ENCODE measurements at regions of chr10 and their contacts with region 1.

Region 1: DNA sequence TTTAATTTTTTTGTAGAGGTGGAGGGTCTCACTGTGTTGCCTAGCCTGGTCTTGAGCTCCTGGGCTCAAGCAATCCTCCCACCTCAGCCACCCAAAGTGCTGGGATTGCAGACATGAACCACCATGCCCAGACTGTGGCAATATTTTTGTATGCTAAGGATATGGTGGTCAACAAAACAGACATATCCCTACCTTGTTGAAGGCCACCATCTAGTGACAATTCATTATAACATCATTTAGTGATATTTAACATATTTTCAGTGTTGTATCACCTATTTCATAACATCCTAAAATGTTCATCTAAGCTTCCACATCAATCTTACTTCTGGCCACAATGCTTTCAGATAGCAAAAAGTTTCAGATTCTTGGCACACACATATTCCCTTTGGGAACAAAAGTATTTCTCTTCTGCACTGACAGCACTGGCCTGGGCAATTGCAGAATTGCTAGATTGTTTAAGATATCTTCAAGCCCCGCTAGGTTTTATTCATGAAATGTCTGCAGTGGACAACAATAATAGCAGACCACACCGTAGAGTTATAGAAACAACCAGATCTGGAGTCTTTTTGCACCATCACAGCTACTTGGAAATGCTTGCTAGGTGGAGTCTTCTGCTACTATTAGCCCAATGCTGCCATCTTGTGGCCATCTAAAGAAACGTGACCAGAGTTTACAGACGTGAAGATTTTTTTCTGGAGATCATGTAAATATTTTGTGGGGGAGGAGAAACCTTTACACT is 58.4 kb downstream of the DNAJC12 start:
- DNase-seq: peak; percentile 79
- ATAC-seq: peak; percentile 75
- H3K4me3 Mint-ChIP-seq: no peak overlapping the region
- H3K27ac Mint-ChIP-seq: no peak overlapping the region
- H3K4me1 Mint-ChIP-seq: peaks cover 17% of the 10 kb centered on the region
- H3K27me3 Mint-ChIP-seq: no peaks in the 10 kb centered on the region
- CTCF ChIP-seq: peak; percentile 88

Region 2: GRCh38 chr10:67666416-67667034 is 113.1 kb before region 1 on chr10:
- CTCF ChIA-PET with region 1: interaction called, 73 read pairs
- POLR2A ChIA-PET with region 1: interaction called, 3 read pairs
- intact Hi-C with region 1: loop called (anchors 5 kb)
- DNase-seq: no peak
- ATAC-seq: no peak
- H3K4me3 Mint-ChIP-seq: no peak overlapping the region
- H3K27ac Mint-ChIP-seq: no peak overlapping the region
- H3K4me1 Mint-ChIP-seq: no peaks in the 10 kb centered on the region
- H3K27me3 Mint-ChIP-seq: peaks cover 11% of the 10 kb centered on the region
- CTCF ChIP-seq: peak; percentile 66

Region 3: DNA sequence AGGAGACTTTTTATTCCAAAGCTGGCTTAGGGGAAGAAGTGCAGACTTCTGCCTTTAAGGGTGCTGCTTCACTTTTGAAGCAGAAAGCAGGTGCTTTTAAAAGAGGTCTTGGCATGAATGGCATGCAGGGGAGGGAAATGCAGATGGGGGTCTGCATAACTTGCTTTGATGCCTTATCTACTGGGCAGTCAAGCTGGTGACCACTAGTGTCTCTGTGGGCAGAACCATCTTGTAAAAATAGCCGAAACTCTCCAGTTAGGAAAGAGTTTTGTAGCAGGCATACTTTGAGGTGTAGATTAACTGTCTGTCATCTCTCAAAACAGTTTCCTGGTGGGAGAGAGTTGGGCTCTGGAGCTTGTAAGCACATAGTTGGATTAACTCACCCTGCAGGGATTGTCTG is 73.7 kb before region 1 on chr10:
- CTCF ChIA-PET with region 1: interaction called, 19 read pairs
- POLR2A ChIA-PET with region 1: no interaction called
- intact Hi-C with region 1: no loop called
- DNase-seq: no peak
- ATAC-seq: no peak
- H3K4me3 Mint-ChIP-seq: no peak overlapping the region
- H3K27ac Mint-ChIP-seq: no peak overlapping the region
- H3K4me1 Mint-ChIP-seq: no peaks in the 10 kb centered on the region
- H3K27me3 Mint-ChIP-seq: peaks cover 4% of the 10 kb centered on the region
- CTCF ChIP-seq: no peak

Region 4: DNA sequence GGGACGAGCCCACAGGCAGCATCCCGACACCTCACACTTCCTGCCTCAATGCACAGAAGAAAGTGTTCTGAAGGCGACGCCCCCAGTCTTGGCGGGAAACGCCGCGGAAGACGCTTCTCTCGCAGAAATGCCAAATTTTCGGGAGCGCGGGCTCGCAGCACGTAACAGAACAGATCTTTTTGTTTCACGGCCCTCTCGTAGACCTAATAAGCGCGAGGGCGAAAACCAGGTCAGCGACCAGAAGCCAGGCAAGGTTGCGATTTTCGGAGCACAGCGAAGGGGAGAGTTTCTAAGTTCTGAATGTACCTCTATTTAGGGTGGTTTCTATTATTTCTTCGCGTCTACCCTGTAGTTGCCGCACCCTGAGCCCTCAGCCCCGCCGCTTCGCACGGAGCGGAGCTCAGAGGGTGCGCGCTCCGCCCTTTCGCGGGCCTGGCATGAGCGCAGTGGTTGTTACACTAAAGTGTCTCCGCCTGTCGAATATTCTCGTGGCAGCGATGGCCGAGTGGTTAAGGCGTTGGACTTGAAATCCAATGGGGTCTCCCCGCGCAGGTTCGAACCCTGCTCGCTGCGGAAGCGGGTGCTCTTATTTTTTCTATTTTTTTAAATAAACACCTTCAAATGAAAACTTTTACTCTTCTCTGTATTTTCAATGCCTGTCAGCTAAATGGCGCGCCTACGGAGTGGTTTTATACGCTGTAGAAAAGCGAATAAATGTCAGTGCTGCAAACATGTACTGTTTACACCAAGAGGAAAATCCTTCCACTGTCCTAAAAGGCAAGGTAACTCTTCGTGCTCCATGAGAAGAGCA is 15.4 kb before region 1 on chr10:
- CTCF ChIA-PET with region 1: interaction called, 59 read pairs
- POLR2A ChIA-PET with region 1: no interaction called
- intact Hi-C with region 1: no loop called
- DNase-seq: peak; percentile 97
- ATAC-seq: peak; percentile 86
- H3K4me3 Mint-ChIP-seq: peak overlapping the region; percentile 87
- H3K27ac Mint-ChIP-seq: peak overlapping the region; percentile 99
- H3K4me1 Mint-ChIP-seq: peaks cover 14% of the 10 kb centered on the region
- H3K27me3 Mint-ChIP-seq: peaks cover 2% of the 10 kb centered on the region
- CTCF ChIP-seq: no peak

Region 5: GRCh38 chr10:68156373-68157185 is 376.9 kb after region 1 on chr10:
- CTCF ChIA-PET with region 1: interaction called, 11 read pairs
- POLR2A ChIA-PET with region 1: no interaction called
- intact Hi-C with region 1: no loop called
- DNase-seq: peak; percentile 80
- ATAC-seq: no peak
- H3K4me3 Mint-ChIP-seq: no peak overlapping the region
- H3K27ac Mint-ChIP-seq: no peak overlapping the region
- H3K4me1 Mint-ChIP-seq: no peaks in the 10 kb centered on the region
- H3K27me3 Mint-ChIP-seq: no peaks in the 10 kb centered on the region
- CTCF ChIP-seq: peak; percentile 95

Measured in activated CD8-positive, alpha-beta T cell treated with anti-CD3 and anti-CD28 coated beads for 36 hours (primary cell).